ENCODE measurements at regions of chr2 and their contacts with region 1.

Region 1: DNA sequence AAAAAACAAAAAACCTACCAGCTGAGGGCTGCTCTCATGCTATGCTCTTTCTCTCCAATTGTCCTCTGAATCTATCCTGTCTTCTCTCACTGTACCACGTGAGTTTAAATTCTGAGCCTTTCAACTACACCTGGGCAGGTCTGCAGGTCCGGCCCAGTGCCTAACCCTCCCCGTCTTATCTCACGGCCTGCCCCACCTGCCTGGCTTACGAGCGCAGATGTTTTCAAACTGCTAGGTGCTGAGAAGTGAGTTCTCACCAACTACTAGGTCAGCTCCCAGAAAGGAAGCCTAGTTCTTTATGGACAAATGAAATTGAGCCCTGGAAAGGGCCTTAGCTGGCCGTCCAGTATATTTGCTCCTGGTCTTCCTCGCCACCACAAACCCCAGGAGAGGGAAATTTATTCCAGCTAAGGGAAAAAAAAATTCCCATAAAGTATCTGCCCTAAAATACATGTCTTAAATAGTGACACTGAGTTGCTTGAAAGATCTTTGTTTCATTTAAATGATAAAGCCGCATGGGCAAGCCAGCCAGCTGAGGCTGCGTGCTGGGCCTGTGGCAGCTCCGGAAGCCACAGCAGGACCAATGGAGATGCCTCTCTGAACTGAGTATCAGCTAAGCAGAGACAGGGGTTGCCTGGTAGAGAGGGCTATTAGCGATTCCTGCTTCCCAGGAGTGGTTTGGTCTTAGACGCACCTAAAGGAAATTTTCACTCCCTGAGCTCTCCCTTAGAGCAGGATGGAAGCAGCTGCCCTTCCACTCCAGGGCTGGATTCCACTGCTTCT is 92.5 kb upstream of the NCK2 start:
- DNase-seq: no peak
- H3K4me3 ChIP-seq: no peak overlapping the region
- H3K27ac ChIP-seq: no peak overlapping the region
- H3K4me1 ChIP-seq: no peaks in the 10 kb centered on the region
- H3K27me3 ChIP-seq: no peaks in the 10 kb centered on the region
- CTCF ChIP-seq: no peak
- EP300 ChIP-seq: no peak
- POLR2A ChIP-seq: no peak

Region 2: DNA sequence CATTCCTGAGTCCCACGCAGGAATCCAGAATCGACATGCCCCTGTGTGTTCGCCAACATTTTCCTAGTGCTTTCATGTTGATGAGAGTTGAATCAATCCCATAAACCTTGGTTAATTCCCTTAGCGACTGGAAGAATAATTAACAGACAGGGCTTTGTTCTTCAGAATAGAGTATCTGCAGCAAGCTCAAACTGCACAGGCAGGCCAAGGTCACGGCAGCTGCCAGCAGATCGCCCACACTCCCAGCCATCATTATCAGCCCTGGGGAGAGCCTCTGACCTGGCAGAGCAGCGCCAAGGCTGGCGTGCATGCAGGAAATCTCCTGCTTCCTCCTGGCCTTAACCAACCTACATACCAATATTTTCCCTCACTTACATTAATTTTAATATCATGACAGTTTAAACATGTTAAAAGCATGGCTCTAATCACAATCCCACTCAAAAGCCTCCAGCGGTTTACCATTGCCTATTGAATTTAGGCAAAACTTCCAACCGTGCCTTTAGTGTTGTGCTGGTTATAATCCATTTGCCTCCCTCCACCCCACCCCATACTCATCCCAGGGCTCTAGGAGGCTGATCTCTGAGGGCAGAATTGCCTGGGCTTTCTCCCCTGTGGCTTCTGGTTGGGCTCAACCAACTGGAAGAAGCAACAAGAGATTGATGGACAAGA is 45.7 kb after region 1 on chr2:
- intact Hi-C with region 1: loop called in 1 of 4 experiments (anchors 2 kb)
- DNase-seq: peak in 2 of 5 donors; percentile 37 to 62
- H3K4me3 ChIP-seq: no peak overlapping the region
- H3K27ac ChIP-seq: no peak overlapping the region
- H3K4me1 ChIP-seq: peaks cover 8% of the 10 kb centered on the region
- H3K27me3 ChIP-seq: no peaks in the 10 kb centered on the region
- CTCF ChIP-seq: no peak
- EP300 ChIP-seq: no peak
- POLR2A ChIP-seq: no peak

Region 3: GRCh38 chr2:105866216-105867185 is 214.3 kb after region 1 on chr2:
- intact Hi-C with region 1: no loop called
- DNase-seq: no peak
- H3K4me3 ChIP-seq: no peak overlapping the region
- H3K27ac ChIP-seq: no peak overlapping the region
- H3K4me1 ChIP-seq: peaks cover 21% of the 10 kb centered on the region
- H3K27me3 ChIP-seq: no peaks in the 10 kb centered on the region
- CTCF ChIP-seq: no peak
- EP300 ChIP-seq: no peak
- POLR2A ChIP-seq: no peak

Measured in ovary (tissue), 10 donors.